T-cell (primary cell): ENCODE measurements at regions of chr5 and their contacts with region 1.

Region 1: DNA sequence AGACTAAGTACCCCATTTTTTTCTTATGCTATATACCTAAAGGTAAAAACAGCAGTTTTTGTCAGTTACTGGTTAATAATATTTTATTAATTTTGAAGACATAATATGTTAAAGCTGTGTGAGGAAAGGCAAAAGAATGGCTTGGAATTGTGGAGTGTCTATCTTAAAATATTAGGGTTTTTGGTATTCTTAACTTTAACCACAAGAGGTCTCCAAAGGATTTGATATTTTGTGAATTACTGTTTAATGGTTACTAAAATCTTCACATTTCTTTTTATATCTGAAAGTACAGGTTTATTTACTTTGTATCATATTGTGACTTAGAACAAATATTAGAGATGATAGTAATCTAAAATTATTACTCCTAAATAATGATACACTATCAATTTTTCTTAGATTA is 32.0 kb upstream of the DHFR start:
- DNase-seq: peak in 1 of 35 experiments; percentile 45
- ATAC-seq: no peak
- H3K4me3 ChIP-seq: no peak overlapping the region
- H3K4me3 Mint-ChIP-seq: no peak overlapping the region
- H3K27ac ChIP-seq: no peak overlapping the region
- H3K27ac Mint-ChIP-seq: no peak overlapping the region
- H3K4me1 ChIP-seq: no peaks in the 10 kb centered on the region
- H3K4me1 Mint-ChIP-seq: peaks cover 14 to 35% (median 29%) of the 10 kb centered on the region in 3 donors
- H3K27me3 ChIP-seq: no peaks in the 10 kb centered on the region
- H3K27me3 Mint-ChIP-seq: no peaks in the 10 kb centered on the region

Region 2: DNA sequence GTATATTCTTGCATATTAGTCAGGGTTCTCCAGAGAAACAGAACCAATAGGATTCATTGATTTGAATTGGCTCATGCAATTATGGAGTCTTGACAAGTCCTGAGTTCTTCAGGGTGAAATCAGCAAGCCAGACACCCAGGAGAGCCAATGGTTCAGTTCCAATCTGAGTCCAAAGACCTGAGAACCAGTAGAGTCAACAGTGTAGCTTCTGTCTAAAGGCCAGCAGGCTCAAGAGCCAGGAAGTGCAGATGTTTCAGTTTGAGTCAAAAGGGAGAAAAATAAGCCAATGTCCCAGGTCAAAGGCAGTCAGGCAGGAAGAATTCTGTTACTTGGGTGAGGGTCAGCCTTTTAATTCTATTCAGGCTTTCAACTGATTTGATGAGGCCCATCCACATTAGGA is 78.9 kb before region 1 on chr5:
- CTCF ChIA-PET with region 1: no interaction called
- POLR2A ChIA-PET with region 1: no interaction called
- DNase-seq: no peak
- ATAC-seq: no peak
- H3K4me3 ChIP-seq: no peak overlapping the region
- H3K4me3 Mint-ChIP-seq: no peak overlapping the region
- H3K27ac ChIP-seq: no peak overlapping the region
- H3K27ac Mint-ChIP-seq: no peak overlapping the region
- H3K4me1 ChIP-seq: no peaks in the 10 kb centered on the region
- H3K4me1 Mint-ChIP-seq: no peaks in the 10 kb centered on the region
- H3K27me3 ChIP-seq: no peaks in the 10 kb centered on the region
- H3K27me3 Mint-ChIP-seq: no peaks in the 10 kb centered on the region

Region 3: DNA sequence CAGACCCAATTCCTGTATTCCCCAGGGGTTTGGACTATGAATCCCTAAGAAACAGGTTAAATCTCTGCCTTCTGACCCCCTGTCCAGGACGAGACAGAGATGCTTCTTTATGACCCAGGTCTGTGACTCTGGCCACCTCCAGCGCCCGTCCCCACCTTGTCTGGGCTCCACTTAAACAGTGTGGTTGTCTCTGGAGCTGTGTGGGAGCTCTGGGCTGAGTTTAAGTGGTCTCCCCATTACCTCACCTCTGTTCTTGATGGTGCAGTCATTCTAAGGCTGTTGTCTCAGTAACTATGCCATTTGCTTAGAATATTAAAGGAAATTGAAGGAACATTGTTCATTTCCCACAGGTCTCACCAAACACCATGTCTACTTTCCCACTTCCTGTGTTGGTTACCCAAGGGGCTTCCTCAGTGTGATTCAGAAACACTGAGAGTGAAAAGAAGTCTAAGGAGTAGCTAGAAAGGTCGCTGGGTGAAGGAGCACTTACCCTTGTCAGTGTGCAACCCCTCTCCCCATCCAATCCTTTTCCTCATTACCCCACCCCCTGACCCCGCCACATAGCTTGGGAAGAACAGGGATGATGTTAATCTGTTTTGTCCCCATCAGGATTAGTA is 418.6 kb after region 1 on chr5:
- CTCF ChIA-PET with region 1: interaction called, 18 to 54 read pairs
- POLR2A ChIA-PET with region 1: no interaction called
- DNase-seq: peak in 1 of 35 experiments; percentile 2
- ATAC-seq: peak; percentile 22 to 44 (median 36)
- H3K4me3 ChIP-seq: no peak overlapping the region
- H3K4me3 Mint-ChIP-seq: peak overlapping the region in 1 of 3 donors; percentile 46
- H3K27ac ChIP-seq: no peak overlapping the region
- H3K27ac Mint-ChIP-seq: peak overlapping the region; percentile 9 to 81
- H3K4me1 ChIP-seq: peaks cover 2 to 11% of the 10 kb centered on the region in 2 experiments
- H3K4me1 Mint-ChIP-seq: peaks cover 26 to 31% (median 28%) of the 10 kb centered on the region in 3 donors
- H3K27me3 ChIP-seq: no peaks in the 10 kb centered on the region
- H3K27me3 Mint-ChIP-seq: no peaks in the 10 kb centered on the region

Region 4: DNA sequence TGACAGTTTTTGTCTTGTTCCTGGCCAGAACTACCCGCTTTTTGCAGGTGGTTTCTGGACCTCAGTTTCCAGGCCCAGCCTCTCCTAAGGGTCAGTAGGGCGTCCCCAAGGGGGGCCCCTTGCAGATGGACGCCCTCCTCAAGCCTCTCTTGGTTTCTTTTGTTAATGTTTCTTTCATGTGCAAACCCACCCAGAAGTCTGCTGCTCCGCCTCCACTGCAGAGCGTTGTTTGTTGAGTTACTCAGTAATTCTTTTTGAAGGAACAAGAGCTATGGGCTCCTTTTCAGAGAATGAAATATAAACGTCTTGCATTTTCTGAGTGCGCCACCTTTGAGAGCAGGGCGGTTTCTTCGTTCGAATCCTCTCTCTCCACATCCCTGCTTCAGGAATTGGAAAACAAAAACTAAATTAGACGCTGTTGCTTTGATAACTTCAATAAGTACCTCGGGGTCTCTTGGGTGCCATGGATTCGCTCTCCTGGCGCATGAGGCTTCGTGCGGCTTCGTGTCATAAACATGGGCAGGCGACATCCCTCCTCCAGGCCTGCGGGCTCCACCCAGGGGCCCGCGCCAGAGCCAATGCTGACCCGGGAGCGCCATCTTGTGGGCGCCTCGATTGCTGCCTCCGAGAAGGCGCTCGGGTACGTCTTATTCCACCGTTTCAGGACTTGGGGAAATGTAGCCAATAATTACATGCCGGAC is 508.0 kb after region 1 on chr5:
- CTCF ChIA-PET with region 1: interaction called, 4 to 26 read pairs
- POLR2A ChIA-PET with region 1: interaction called in 1 of 2 experiments, 3 read pairs
- DNase-seq: peak; percentile 51 to 84 (median 74)
- ATAC-seq: peak; percentile 96 to 98 (median 98)
- H3K4me3 ChIP-seq: no peak overlapping the region
- H3K4me3 Mint-ChIP-seq: peak overlapping the region in 2 of 3 donors; percentile 16 to 17
- H3K27ac ChIP-seq: no peak overlapping the region
- H3K27ac Mint-ChIP-seq: peak overlapping the region; percentile 54 to 68
- H3K4me1 ChIP-seq: peaks cover 0 to 7% of the 10 kb centered on the region in 2 experiments
- H3K4me1 Mint-ChIP-seq: peaks cover 9 to 10% (median 9%) of the 10 kb centered on the region in 3 donors
- H3K27me3 ChIP-seq: no peaks in the 10 kb centered on the region
- H3K27me3 Mint-ChIP-seq: no peaks in the 10 kb centered on the region